GM12878 (cell line): ENCODE measurements at regions of chr11 and their contacts with region 1.

Region 1: DNA sequence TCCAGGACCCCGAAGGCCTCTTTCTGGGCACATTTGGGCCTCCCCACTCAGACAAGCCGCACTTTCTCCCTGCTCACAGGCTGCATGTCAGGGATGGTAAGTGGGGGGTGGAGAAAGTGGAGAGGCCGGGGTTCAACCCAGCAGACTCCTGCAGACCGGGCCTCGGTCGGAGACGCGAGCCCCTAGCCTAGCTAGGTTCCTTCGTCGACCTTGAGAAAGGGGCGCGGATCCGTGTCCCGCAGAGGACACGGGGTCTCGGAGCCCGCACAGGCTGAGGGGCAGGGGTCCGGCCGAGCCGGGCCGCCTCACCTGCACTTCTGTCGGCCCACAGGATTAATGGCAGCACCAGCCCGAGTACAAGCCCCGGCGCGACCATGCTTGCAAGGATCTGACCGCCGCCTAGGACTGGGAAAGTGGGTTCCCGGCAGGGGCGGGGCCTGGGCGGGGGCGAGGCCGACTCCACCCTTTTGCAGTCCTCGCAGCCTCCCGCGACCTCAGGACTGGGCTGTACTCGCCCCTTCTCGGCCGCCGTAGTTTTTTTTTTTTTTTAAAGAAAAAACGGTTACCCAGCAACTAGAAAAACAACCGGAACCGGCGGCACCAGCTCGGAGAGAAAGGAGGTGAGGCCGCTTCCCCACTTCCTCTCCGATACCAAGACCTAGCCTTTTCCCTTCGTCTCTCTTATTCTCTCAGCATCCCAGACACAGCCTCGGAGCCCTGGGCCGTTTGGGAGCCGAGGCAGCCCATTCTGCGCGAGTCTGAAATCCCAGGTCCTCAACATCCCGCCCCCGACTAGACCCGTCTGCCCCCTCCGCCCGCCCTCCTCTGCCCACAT is at the starts of genes SIAE and SPA17:
- DNase-seq: peak; percentile 74
- ATAC-seq: peak; percentile 95
- H3K4me3 ChIP-seq: peak within 1 kb of the TSS; percentile 96
- H3K27ac ChIP-seq: peak within 1 kb of the TSS; percentile 65
- H3K4me1 ChIP-seq: peaks cover 7% of the 10 kb centered on the region
- H3K27me3 ChIP-seq: no peaks in the 10 kb centered on the region
- CTCF ChIP-seq: no peak
- EP300 ChIP-seq: peak in 1 of 2 experiments; percentile 67; a peak in 1 of 4 replicates
- POLR2A ChIP-seq: peak; percentile 73
- RAD21 ChIP-seq: no peak
- polyA plus RNA-seq, gene SIAE: 0.93 to 0.97 TPM
- polyA plus RNA-seq, gene SPA17: 6.1 to 7.3 TPM

Region 2: DNA sequence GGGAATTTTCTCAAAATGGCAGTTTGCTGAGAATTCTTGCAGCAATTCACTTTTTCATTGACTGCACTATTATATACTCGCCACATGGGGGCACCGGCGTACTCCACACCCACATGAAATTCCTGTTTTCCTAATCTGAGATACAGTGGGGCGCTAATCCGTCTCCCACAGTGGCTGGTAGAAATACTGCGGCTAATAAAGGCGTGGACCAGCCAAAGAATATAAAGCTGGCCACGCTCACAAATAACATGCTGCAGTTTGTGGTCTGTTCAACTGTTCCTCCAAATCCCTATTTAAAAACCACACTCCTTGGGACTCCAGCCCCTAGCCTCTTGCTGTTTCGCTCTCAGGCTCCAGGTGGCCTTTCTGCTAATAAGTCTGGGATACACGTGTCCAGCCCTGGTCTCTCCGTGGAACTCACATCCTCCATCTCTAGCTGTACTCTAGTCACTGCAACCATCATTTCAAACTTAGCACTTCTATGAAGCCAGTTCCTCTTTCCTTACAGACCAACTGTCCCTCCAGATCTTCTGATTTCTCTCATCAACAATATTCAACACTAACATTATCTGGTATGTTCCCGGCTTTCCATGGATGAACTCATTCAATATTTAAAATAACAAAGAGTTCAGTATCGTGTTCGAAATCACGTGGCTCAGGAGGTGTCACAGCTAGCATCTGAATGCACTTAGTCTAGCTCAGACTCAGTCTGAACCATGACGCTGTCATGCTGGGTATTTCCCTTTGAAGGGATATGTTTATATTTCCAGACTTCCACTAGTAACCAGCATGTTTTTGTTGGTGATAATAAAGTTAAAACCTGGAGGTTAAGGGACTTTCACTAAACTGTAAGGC is 28.9 kb before region 1 on chr11:
- CTCF ChIA-PET with region 1: interaction called, 15 read pairs
- POLR2A ChIA-PET with region 1: no interaction called
- RAD21 ChIA-PET with region 1: interaction called, 4 read pairs
- SMC1A ChIA-PET with region 1: interaction called, 4 read pairs
- in situ Hi-C with region 1: no loop called
- intact Hi-C with region 1: no loop called
- DNase-seq: no peak
- ATAC-seq: peak; percentile 71
- H3K4me3 ChIP-seq: no peak overlapping the region
- H3K27ac ChIP-seq: no peak overlapping the region
- H3K4me1 ChIP-seq: no peaks in the 10 kb centered on the region; the same call in 1 of the 2 replicates
- H3K27me3 ChIP-seq: no peaks in the 10 kb centered on the region
- CTCF ChIP-seq: peak; percentile 72 to 89 (median 77)
- EP300 ChIP-seq: no peak
- POLR2A ChIP-seq: no peak
- RAD21 ChIP-seq: peak; percentile 77

Region 3: GRCh38 chr11:124717786-124718651 is 44.5 kb after region 1 on chr11:
- CTCF ChIA-PET with region 1: interaction called, 12 read pairs
- POLR2A ChIA-PET with region 1: interaction called, 4 read pairs
- RAD21 ChIA-PET with region 1: interaction called, 9 read pairs
- SMC1A ChIA-PET with region 1: interaction called, 7 read pairs
- in situ Hi-C with region 1: no loop called
- intact Hi-C with region 1: loop called (anchors 2 kb)
- DNase-seq: no peak
- ATAC-seq: peak; percentile 80
- H3K4me3 ChIP-seq: no peak overlapping the region; the same call in 1 of the 2 replicates
- H3K27ac ChIP-seq: no peak overlapping the region
- H3K4me1 ChIP-seq: no peaks in the 10 kb centered on the region; the same call in 1 of the 2 replicates
- H3K27me3 ChIP-seq: peaks cover 0 to 13% of the 10 kb centered on the region in 2 experiments; a peak in 2 of 4 replicates
- CTCF ChIP-seq: no peak
- EP300 ChIP-seq: peak in 1 of 2 experiments; percentile 60; a peak in 2 of 4 replicates
- POLR2A ChIP-seq: no peak
- RAD21 ChIP-seq: no peak

Region 4: GRCh38 chr11:124739479-124740276 is 66.1 kb after region 1 on chr11 and contains the start of gene NRGN:
- CTCF ChIA-PET with region 1: interaction called, 109 read pairs
- POLR2A ChIA-PET with region 1: interaction called, 6 read pairs
- RAD21 ChIA-PET with region 1: interaction called, 23 read pairs
- SMC1A ChIA-PET with region 1: interaction called, 32 read pairs
- in situ Hi-C with region 1: no loop called
- intact Hi-C with region 1: no loop called
- DNase-seq: no peak
- ATAC-seq: peak; percentile 99
- H3K4me3 ChIP-seq: peak within 1 kb of the TSS; percentile 81
- H3K27ac ChIP-seq: no peak within 1 kb of the TSS
- H3K4me1 ChIP-seq: peaks cover 10% of the 10 kb centered on the region
- H3K27me3 ChIP-seq: peaks cover 2 to 3% of the 10 kb centered on the region in 2 experiments; a peak in 1 of 4 replicates
- CTCF ChIP-seq: no peak
- EP300 ChIP-seq: no peak
- POLR2A ChIP-seq: 0 out of 2 replicates have a peak, but pooled peaks have one; percentile 45
- RAD21 ChIP-seq: no peak
- polyA plus RNA-seq, gene NRGN: not detected

Region 5: DNA sequence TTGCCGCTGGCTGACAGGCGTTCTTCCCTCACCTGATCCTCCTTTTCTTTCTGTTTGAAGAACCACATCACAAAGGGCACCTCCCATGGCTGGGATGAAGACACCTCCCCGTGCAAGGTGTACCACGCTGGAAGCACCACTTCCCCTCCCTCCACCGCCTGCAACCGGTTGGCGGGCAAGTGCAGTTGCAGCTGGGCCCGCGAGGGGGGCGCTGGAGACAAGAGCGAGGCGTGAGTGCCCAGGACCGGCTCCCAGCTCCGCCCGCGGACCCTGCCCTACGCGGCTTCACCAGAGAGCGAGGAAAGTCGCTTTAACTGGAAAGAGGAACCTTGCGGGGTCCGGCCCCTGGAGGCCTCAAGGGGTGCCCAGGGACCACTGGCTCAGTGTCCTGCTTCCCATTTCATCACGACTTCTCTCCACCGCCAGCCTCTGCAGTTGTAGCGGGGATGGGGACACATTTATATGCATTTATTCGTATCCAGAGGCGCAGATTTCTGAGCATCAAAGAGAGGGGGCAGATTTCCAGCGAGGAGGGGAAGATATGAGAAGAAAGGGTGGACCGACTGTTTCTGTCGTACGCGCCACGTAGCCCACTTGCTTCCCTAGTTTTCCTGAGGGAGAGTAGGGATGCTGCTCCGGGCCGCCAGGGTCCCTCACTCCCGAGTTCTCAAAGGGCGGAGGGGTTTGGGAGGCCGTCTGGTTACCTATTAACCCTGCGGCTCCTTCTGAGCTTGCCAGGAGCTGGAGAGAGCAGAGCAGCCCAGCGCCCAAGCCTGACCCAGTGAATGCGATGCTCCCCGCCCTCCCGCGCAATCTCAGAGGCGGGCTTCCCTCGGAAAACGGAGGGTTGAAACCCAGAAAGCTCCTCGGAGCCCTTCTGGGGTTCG is 85.0 kb after region 1 on chr11:
- CTCF ChIA-PET with region 1: interaction called, 190 read pairs
- POLR2A ChIA-PET with region 1: interaction called, 8 read pairs
- RAD21 ChIA-PET with region 1: interaction called, 67 read pairs
- SMC1A ChIA-PET with region 1: interaction called, 93 read pairs
- in situ Hi-C with region 1: loop called (anchors 5 kb)
- intact Hi-C with region 1: loop called (anchors 1 kb)
- DNase-seq: no peak
- ATAC-seq: peak; percentile 75
- H3K4me3 ChIP-seq: peak overlapping the region; percentile 83
- H3K27ac ChIP-seq: 0 out of 2 replicates have a peak overlapping the region, but pooled peaks have one; percentile 10
- H3K4me1 ChIP-seq: peaks cover 18% of the 10 kb centered on the region
- H3K27me3 ChIP-seq: no peaks in the 10 kb centered on the region
- CTCF ChIP-seq: peak; percentile 88 to 89 (median 89)
- EP300 ChIP-seq: no peak
- POLR2A ChIP-seq: 0 out of 2 replicates have a peak, but pooled peaks have one; percentile 28
- RAD21 ChIP-seq: peak; percentile 57

Region 6: DNA sequence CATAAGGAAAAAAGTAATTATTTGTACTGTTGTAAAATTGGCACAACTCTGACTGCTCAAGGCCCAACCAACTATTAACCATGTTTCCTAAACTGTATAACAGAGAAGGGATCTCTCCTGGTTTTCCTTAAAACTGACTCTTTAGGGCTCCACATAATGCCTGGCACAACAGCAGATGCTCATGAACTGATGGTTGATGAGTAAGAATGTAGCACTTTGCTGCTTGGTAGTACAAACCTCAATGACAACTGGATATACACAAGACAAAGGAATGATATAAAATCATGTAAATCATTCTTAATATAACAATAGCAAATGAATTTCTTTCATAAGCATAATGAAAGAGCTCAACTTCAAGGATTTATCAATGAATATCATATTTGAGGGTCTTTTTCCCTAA is 115.0 kb after region 1 on chr11:
- CTCF ChIA-PET with region 1: interaction called, 128 read pairs
- POLR2A ChIA-PET with region 1: interaction called, 5 read pairs
- RAD21 ChIA-PET with region 1: interaction called, 56 read pairs
- SMC1A ChIA-PET with region 1: interaction called, 83 read pairs
- in situ Hi-C with region 1: no loop called
- intact Hi-C with region 1: loop called (anchors 1 kb)
- DNase-seq: no peak
- ATAC-seq: no peak
- H3K4me3 ChIP-seq: no peak overlapping the region
- H3K27ac ChIP-seq: no peak overlapping the region
- H3K4me1 ChIP-seq: peaks cover 12% of the 10 kb centered on the region
- H3K27me3 ChIP-seq: no peaks in the 10 kb centered on the region
- CTCF ChIP-seq: no peak
- EP300 ChIP-seq: no peak
- POLR2A ChIP-seq: no peak
- RAD21 ChIP-seq: no peak

Region 7: DNA sequence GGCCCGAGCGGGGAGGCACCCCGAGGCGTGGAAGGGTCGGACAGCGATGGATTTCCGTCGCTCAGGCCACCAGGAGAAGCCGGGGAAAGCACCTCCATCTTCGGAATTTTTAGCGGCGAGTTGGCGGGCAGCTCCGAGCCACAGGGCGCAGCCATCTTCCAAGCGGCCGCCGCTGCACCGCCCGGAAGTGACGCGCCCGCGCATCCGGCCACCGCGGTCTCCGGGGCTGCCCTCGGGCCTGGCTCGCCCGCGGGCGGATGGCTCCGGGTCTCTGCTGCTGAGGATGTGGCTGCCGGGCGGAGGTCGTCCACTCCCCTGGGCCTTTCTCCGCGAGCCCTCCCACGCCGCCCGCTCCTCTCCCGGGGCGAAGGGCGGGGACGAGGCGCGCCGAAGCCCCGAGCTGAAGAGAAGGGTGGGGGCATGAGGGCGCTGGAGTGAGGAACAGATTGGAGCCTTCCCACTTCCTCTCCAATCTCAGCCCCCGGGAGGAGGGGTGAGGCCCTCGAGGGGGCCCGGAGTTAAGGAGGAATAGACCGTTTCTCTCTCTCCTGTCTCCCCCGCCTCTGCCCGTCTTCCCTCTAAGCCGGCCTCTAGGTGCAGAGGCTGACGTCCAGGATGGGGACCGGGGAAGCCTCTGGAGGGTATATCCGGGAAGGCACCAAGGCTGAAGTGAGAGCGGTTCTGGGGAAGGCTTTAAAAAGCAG is 126.8 kb after region 1 on chr11 and contains the start of gene MSANTD2:
- CTCF ChIA-PET with region 1: interaction called, 128 read pairs
- POLR2A ChIA-PET with region 1: no interaction called
- RAD21 ChIA-PET with region 1: interaction called, 56 read pairs
- SMC1A ChIA-PET with region 1: interaction called, 83 read pairs
- in situ Hi-C with region 1: no loop called
- intact Hi-C with region 1: no loop called
- DNase-seq: no peak
- ATAC-seq: peak; percentile 95
- H3K4me3 ChIP-seq: peak within 1 kb of the TSS; percentile 84
- H3K27ac ChIP-seq: peak within 1 kb of the TSS; percentile 94
- H3K4me1 ChIP-seq: peaks cover 9% of the 10 kb centered on the region
- H3K27me3 ChIP-seq: peaks cover 0 to 1% of the 10 kb centered on the region in 2 experiments; a peak in 1 of 4 replicates
- CTCF ChIP-seq: no peak
- EP300 ChIP-seq: 0 out of 4 replicates have a peak, but pooled peaks of 1 of the 2 experiments have one; percentile 15
- POLR2A ChIP-seq: peak; percentile 98
- RAD21 ChIP-seq: no peak
- polyA plus RNA-seq, gene MSANTD2: 3.0 to 4.1 TPM